ENCODE measurements at regions of chr1 and their contacts with region 1.

Region 1: GRCh38 chr1:32944180-32944579 is 20.4 kb downstream of the RNF19B start:
- DNase-seq: no peak
- H3K4me3 Mint-ChIP-seq: no peak overlapping the region
- H3K27ac Mint-ChIP-seq: no peak overlapping the region
- H3K4me1 Mint-ChIP-seq: peaks cover 34% of the 10 kb centered on the region
- H3K27me3 Mint-ChIP-seq: no peaks in the 10 kb centered on the region

Region 2: GRCh38 chr1:32933742-32934322 is 10.3 kb before region 1 on chr1:
- CTCF ChIA-PET with region 1: interaction called, 11 read pairs
- POLR2A ChIA-PET with region 1: no interaction called
- DNase-seq: no peak
- H3K4me3 Mint-ChIP-seq: no peak overlapping the region
- H3K27ac Mint-ChIP-seq: no peak overlapping the region
- H3K4me1 Mint-ChIP-seq: peaks cover 28% of the 10 kb centered on the region
- H3K27me3 Mint-ChIP-seq: no peaks in the 10 kb centered on the region

Region 3: GRCh38 chr1:32958827-32959226 is 14.6 kb after region 1 on chr1:
- CTCF ChIA-PET with region 1: interaction called, 10 read pairs
- POLR2A ChIA-PET with region 1: no interaction called
- DNase-seq: no peak
- H3K4me3 Mint-ChIP-seq: no peak overlapping the region
- H3K27ac Mint-ChIP-seq: no peak overlapping the region
- H3K4me1 Mint-ChIP-seq: peaks cover 60% of the 10 kb centered on the region
- H3K27me3 Mint-ChIP-seq: no peaks in the 10 kb centered on the region

Region 4: GRCh38 chr1:32981003-32981901 is 37.1 kb after region 1 on chr1:
- CTCF ChIA-PET with region 1: interaction called, 10 read pairs
- POLR2A ChIA-PET with region 1: no interaction called
- DNase-seq: peak; percentile 73
- H3K4me3 Mint-ChIP-seq: peak overlapping the region; percentile 53
- H3K27ac Mint-ChIP-seq: peak overlapping the region; percentile 93
- H3K4me1 Mint-ChIP-seq: peaks cover 60% of the 10 kb centered on the region
- H3K27me3 Mint-ChIP-seq: no peaks in the 10 kb centered on the region

Measured in activated CD4-positive, alpha-beta T cell treated with anti-CD3 and anti-CD28 coated beads, Interleukin-2, amount 10 ng/mL, durations not matched to agents 7 days and 5 days (primary cell).